Activated CD4-positive, alpha-beta T cell treated with anti-CD3 and anti-CD28 coated beads for 36 hours (primary cell): ENCODE measurements at regions of chr19 and their contacts with region 1.

Region 1: GRCh38 chr19:12551060-12551832 is at the start of gene ZNF564:
- DNase-seq: peak; percentile 94
- ATAC-seq: peak; percentile 99
- H3K4me3 Mint-ChIP-seq: peak within 1 kb of the TSS; percentile 98
- H3K27ac Mint-ChIP-seq: peak within 1 kb of the TSS; percentile 97
- H3K4me1 Mint-ChIP-seq: peaks cover 40% of the 10 kb centered on the region
- H3K27me3 Mint-ChIP-seq: no peaks in the 10 kb centered on the region
- total RNA-seq, gene ZNF564: 5.2 to 5.6 TPM

Region 2: DNA sequence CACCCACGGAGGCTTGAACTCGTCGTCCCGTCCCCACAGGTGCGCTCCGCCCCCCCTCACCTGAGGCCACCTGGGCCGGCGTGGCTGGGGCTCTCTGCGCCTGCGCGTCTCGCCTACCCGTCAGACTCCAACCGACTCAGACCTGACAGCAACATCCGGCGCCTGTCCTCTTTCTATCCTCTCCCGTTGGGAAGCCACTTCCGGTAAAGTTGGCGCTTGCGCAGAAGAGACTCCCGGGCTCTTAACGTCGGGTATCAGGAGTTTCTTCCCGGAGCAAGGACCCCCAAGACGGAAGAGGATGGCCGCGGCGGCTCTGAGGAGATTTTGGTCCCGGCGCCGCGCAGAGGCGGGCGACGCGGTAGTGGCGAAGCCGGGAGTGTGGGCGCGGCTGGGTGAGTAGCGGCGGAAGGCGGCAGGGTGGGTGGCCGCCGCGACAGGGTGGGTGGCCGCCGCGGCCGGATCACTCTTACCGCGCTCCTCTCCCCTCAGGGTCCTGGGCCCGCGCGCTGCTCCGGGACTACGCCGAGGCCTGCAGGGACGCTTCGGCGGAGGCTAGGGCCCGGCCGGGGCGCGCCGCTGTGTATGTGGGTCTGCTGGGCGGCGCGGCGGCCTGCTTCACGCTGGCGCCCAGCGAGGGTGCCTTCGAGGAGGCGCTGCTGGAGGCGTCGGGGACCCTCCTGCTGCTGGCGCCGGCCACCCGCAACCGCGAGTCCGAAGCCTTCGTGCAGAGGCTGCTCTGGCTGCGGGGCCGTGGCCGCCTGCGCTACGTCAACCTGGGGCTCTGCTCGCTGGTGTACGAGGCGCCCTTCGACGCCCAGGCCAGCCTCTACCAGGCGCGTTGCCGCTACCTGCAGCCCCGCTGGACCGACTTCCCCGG is 1622.5 kb before region 1 on chr19 and contains the starts of genes TIMM29 and YIPF2:
- CTCF ChIA-PET with region 1: no interaction called
- POLR2A ChIA-PET with region 1: no interaction called
- intact Hi-C with region 1: no loop called
- DNase-seq: peak; percentile 97
- ATAC-seq: peak; percentile 96
- H3K4me3 Mint-ChIP-seq: peak within 1 kb of the TSS; percentile 90
- H3K27ac Mint-ChIP-seq: peak within 1 kb of the TSS; percentile 79
- H3K4me1 Mint-ChIP-seq: peaks cover 21% of the 10 kb centered on the region
- H3K27me3 Mint-ChIP-seq: no peaks in the 10 kb centered on the region
- total RNA-seq, gene TIMM29: 8.6 to 15.5 TPM
- total RNA-seq, gene YIPF2: 15.8 to 21.3 TPM

Region 3: DNA sequence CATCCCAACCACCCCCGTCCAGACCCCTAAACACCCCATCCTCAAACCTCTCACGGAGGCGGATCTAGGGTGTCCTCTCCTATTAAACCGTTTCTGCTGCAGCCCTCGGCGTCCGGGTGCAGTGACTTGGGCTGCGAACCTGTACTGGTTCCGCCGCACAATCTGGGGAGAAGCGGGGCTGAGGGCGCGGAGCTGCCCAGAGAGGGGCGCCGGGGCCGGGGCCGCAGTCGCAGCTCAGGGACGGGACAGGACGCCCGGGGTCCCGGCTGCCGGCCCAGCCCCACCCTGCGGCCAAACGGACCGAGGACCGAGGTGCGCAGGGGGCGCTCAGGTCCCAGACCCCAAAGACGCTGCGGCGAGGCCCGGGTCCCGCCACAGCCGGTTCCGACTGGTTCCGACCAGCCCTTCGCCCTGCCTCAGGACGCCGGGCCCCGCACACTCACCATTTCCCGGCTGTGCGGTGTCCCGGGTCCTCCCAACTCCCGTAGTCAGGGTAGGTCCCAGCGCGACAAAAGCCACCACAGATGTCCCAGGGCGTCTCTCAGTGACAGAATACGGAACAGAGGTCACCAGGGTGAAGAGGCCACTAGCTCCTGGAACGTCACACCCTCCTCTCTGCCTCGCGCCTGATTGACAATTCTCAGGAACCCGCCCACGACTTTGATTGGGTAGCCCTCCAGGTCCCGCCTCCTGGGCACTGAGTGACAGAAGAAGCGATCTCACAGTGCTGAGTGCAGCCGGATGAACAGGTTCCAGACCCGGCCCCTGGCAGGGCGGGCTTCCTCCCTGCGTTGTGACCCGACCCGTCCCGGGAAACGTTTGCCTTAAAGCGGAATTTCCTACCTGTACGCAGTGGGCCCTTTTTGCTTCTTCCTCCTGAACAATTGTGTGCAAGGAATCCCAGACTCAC is 256.7 kb before region 1 on chr19 and contains the start of gene ZNF44:
- CTCF ChIA-PET with region 1: no interaction called
- POLR2A ChIA-PET with region 1: no interaction called
- intact Hi-C with region 1: loop called in 1 of 2 experiments (anchors 1 kb)
- DNase-seq: peak; percentile 98
- ATAC-seq: peak; percentile 98
- H3K4me3 Mint-ChIP-seq: peak within 1 kb of the TSS; percentile 98
- H3K27ac Mint-ChIP-seq: peak within 1 kb of the TSS; percentile 98
- H3K4me1 Mint-ChIP-seq: peaks cover 32% of the 10 kb centered on the region
- H3K27me3 Mint-ChIP-seq: no peaks in the 10 kb centered on the region
- total RNA-seq, gene ZNF44: 7.3 to 8.1 TPM

Region 4: DNA sequence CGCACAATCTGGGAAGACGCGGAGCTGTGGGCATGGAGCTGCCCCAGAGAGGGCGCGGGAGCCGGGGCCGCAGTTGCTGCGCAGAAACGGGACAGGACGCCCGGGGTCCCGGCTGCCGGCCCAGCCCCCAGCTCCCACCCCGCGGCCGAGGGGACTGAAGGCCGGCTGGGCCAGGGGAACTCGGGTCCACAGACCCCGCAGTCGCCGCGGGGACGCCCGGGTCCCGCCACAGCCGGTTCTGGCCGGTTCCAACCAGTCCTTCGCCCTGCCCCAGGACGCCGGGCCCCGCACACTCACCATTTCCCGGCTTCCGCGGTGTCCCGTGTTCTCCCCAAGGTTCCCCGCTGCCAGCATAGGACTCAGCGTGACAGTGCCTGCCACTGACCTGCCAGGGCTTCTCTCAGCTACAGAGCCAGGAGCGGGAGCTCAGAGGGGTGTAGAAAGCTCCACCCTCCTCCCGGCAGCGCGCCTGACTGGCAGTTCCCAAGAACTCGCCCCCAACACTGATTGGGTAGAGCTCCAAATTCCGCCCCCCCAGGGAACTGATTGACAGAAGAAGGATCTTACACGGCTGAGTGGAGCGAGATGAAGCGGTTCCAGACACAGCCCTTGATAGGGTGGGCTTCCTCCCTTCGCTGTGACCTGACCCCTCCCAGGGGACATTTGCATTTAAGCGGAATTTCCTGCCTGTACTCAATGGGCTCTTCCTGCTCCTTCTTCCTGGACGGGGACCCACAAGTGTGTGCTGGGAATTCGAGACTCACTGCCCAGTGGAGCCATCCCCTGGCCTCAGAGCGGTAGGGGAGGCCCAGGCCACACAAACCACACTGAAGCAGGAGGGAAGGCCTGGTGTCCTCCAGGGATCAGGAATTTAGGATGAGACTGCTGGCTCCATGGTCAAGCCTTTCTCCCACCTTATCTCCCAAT is 185.7 kb before region 1 on chr19 and contains the start of gene ZNF442:
- CTCF ChIA-PET with region 1: interaction called, 3 read pairs
- POLR2A ChIA-PET with region 1: no interaction called
- intact Hi-C with region 1: loop called in 1 of 2 experiments (anchors 1 kb)
- DNase-seq: peak; percentile 93
- ATAC-seq: peak; percentile 99
- H3K4me3 Mint-ChIP-seq: peak within 1 kb of the TSS; percentile 93
- H3K27ac Mint-ChIP-seq: peak within 1 kb of the TSS; percentile 79
- H3K4me1 Mint-ChIP-seq: peaks cover 18% of the 10 kb centered on the region
- H3K27me3 Mint-ChIP-seq: no peaks in the 10 kb centered on the region
- total RNA-seq, gene ZNF442: 1.1 to 1.7 TPM

Region 5: GRCh38 chr19:12440541-12441316 is 110.5 kb before region 1 on chr19 and contains the start of gene ZNF443:
- CTCF ChIA-PET with region 1: no interaction called
- POLR2A ChIA-PET with region 1: no interaction called
- intact Hi-C with region 1: loop called in 1 of 2 experiments (anchors 1 kb)
- DNase-seq: peak; percentile 99
- ATAC-seq: peak; percentile 98
- H3K4me3 Mint-ChIP-seq: peak within 1 kb of the TSS; percentile 99
- H3K27ac Mint-ChIP-seq: peak within 1 kb of the TSS; percentile 99
- H3K4me1 Mint-ChIP-seq: peaks cover 10% of the 10 kb centered on the region
- H3K27me3 Mint-ChIP-seq: no peaks in the 10 kb centered on the region
- total RNA-seq, gene ZNF443: 3.4 to 4.0 TPM

Region 6: GRCh38 chr19:12495002-12495802 is 56.0 kb before region 1 on chr19:
- CTCF ChIA-PET with region 1: no interaction called
- POLR2A ChIA-PET with region 1: no interaction called
- intact Hi-C with region 1: loop called in 1 of 2 experiments (anchors 1 kb)
- DNase-seq: peak; percentile 97
- ATAC-seq: peak; percentile 100
- H3K4me3 Mint-ChIP-seq: peak overlapping the region; percentile 75
- H3K27ac Mint-ChIP-seq: peak overlapping the region; percentile 71
- H3K4me1 Mint-ChIP-seq: peaks cover 7% of the 10 kb centered on the region
- H3K27me3 Mint-ChIP-seq: no peaks in the 10 kb centered on the region

Region 7: GRCh38 chr19:12596927-12597548 is 45.8 kb after region 1 on chr19:
- CTCF ChIA-PET with region 1: no interaction called
- POLR2A ChIA-PET with region 1: no interaction called
- intact Hi-C with region 1: no loop called
- DNase-seq: no peak
- ATAC-seq: no peak
- H3K4me3 Mint-ChIP-seq: no peak overlapping the region
- H3K27ac Mint-ChIP-seq: no peak overlapping the region
- H3K4me1 Mint-ChIP-seq: no peaks in the 10 kb centered on the region
- H3K27me3 Mint-ChIP-seq: no peaks in the 10 kb centered on the region

Region 8: GRCh38 chr19:12666265-12667048 is 115.2 kb after region 1 on chr19 and contains the starts of genes MAN2B1 and WDR83:
- CTCF ChIA-PET with region 1: no interaction called
- POLR2A ChIA-PET with region 1: no interaction called
- intact Hi-C with region 1: loop called in 1 of 2 experiments (anchors 1 kb)
- DNase-seq: peak; percentile 90
- ATAC-seq: peak; percentile 73
- H3K4me3 Mint-ChIP-seq: peak within 1 kb of the TSS; percentile 86
- H3K27ac Mint-ChIP-seq: peak within 1 kb of the TSS; percentile 83
- H3K4me1 Mint-ChIP-seq: peaks cover 43% of the 10 kb centered on the region
- H3K27me3 Mint-ChIP-seq: no peaks in the 10 kb centered on the region
- total RNA-seq, gene MAN2B1: 118 to 154 TPM
- total RNA-seq, gene WDR83: 13.5 to 19.5 TPM

Region 9: DNA sequence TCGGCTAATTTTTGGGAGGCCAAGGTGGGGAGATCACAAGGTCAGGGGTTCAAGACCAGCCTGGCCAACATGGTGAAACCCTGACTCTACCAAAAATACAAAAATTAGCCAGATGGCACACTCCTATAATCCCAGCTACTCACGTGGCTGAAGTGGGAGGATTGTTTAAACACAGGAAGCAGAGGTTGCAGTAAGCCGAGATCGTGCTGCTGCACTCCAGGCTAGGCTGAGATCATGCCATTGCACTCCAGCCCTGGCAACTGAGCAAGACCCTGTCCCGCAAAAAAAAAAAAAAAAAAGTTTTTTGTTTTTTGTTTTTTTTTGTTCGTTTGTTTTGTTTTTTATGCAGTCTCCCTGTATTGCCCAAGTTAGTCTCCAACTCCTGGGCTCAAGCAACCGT is 308.3 kb after region 1 on chr19:
- CTCF ChIA-PET with region 1: no interaction called
- POLR2A ChIA-PET with region 1: no interaction called
- intact Hi-C with region 1: no loop called
- DNase-seq: no peak
- ATAC-seq: no peak
- H3K4me3 Mint-ChIP-seq: no peak overlapping the region
- H3K27ac Mint-ChIP-seq: no peak overlapping the region
- H3K4me1 Mint-ChIP-seq: no peaks in the 10 kb centered on the region
- H3K27me3 Mint-ChIP-seq: no peaks in the 10 kb centered on the region